Vagina (tissue), 2 donors: ENCODE measurements at regions of chr1 and their contacts with region 1.

Region 1: DNA sequence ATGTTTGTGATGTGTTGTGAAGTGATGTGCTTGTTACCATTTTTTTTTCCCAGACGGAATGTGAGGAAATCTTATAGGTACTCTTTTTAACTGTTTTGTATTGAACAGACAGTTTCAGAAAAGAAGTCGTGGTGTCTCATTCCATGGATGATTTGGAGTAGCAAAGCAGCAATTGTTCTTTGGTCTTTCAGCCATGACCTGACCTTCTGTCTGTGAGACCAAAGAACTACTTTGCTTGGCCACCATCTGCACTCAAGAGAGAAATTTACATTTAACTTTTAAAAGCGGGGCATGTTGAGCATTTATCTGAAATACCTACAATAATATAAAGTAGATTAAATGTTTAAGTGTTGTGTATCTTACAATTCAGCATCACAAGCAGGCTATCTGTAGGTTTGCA is 90.2 kb downstream of the SDCCAG8 start:
- DNase-seq: no peak
- H3K4me3 ChIP-seq: no peak overlapping the region
- H3K27ac ChIP-seq: no peak overlapping the region
- H3K4me1 ChIP-seq: no peaks in the 10 kb centered on the region
- H3K27me3 ChIP-seq: no peaks in the 10 kb centered on the region
- CTCF ChIP-seq: no peak
- POLR2A ChIP-seq: no peak

Region 2: GRCh38 chr1:243799908-243800307 is 453.9 kb after region 1 on chr1:
- intact Hi-C with region 1: no loop called
- DNase-seq: no peak
- H3K4me3 ChIP-seq: no peak overlapping the region
- H3K27ac ChIP-seq: no peak overlapping the region
- H3K4me1 ChIP-seq: peaks cover 31% of the 10 kb centered on the region
- H3K27me3 ChIP-seq: no peaks in the 10 kb centered on the region
- CTCF ChIP-seq: no peak
- POLR2A ChIP-seq: no peak

Region 3: GRCh38 chr1:244272471-244273261 is 926.6 kb after region 1 on chr1:
- intact Hi-C with region 1: loop called (anchors 2 kb)
- DNase-seq: no peak
- H3K4me3 ChIP-seq: no peak overlapping the region
- H3K27ac ChIP-seq: peak overlapping the region; percentile 68
- H3K4me1 ChIP-seq: peaks cover 13% of the 10 kb centered on the region
- H3K27me3 ChIP-seq: no peaks in the 10 kb centered on the region
- CTCF ChIP-seq: peak; percentile 77 to 97 (median 96)
- POLR2A ChIP-seq: no peak